A673 (cell line): ENCODE measurements at regions of chr2 and their contacts with region 1.

Region 1: DNA sequence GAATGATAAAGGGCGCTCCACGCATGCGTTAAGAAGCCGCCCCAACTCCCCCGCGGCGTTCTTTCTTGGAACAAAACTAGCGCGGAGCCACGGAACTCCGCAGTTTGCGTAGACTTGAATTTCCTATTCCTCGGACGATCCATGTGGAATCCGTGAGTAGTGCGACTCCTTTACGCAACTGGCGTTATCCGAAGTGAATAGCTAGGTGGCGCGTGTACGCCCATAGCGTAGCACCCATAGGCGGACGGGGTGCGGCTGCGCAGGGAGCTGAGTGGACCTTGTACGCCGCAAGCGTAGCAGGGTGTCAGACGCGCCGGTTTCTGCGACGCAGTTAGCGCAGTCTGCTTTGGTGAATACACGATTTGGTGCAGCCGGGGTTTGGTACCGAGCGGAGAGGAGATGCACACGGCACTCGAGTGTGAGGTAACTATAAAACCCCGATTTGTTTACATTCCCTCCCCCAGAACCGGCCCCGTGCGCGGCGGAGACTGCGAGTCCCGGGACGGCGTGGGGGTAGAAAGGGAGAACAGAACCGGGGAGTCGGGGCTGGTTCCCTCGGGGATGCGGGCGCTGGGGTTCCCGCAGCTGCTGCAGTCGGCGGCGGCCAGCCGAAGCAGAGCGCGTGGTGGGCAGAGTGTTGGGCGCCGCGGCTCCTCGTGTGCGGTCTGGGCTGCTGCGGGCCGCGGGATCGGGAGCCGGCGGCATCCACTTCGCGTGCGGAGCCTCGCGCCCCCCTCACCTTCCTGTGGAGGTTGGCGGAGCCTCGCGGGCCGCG is at the start of gene SLC39A10:
- DNase-seq: peak; percentile 99
- H3K4me3 ChIP-seq: peak within 1 kb of the TSS; percentile 88
- H3K27ac ChIP-seq: peak within 1 kb of the TSS; percentile 93
- H3K4me1 ChIP-seq: peaks cover 14% of the 10 kb centered on the region
- H3K27me3 ChIP-seq: no peaks in the 10 kb centered on the region
- CTCF ChIP-seq: no peak
- total RNA-seq, gene SLC39A10: 42.3 and 58.2 TPM in 2 replicates

Region 2: DNA sequence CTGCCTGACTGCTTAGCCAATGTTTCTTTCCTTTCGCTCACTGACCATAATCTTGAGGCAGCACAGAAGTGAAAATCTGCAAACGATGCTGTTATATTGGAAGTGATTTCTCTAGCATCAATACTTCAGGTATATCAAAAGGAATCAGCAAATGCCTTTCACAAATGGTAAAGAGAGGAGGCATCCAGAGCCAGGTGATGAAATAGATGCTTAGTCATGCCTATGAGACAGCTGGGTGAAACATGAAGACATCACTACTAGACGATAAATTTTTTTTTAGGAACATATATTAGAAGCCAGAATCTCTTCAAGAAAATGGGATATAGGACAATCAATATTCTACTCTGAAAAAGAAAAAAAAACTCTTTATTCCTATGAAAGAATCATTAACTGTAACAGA is 249.3 kb before region 1 on chr2:
- CTCF ChIA-PET with region 1: no interaction called
- POLR2A ChIA-PET with region 1: no interaction called
- intact Hi-C with region 1: loop called (anchors 2 kb)
- DNase-seq: no peak
- H3K4me3 ChIP-seq: no peak overlapping the region
- H3K27ac ChIP-seq: no peak overlapping the region
- H3K4me1 ChIP-seq: no peaks in the 10 kb centered on the region
- H3K27me3 ChIP-seq: no peaks in the 10 kb centered on the region
- CTCF ChIP-seq: no peak

Region 3: DNA sequence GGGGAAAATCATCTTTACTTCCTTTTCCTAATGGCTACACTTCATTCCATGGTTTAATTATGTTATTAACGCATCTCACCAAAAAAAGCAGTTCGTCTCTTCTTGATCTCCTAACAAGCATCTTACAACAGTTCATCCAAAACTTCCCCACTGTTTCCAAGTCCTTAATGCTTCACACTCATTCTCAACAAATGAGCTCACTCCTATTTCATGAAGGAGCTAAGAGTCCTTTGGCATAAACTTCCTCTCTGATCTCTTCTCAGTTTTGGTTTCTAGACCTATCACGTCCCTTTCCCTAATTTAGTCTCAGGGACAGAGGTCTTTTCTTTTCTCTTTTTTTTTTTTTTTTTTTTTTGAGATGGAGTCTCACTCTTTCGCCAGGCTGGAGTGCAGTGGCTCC is 205.9 kb before region 1 on chr2:
- CTCF ChIA-PET with region 1: no interaction called
- POLR2A ChIA-PET with region 1: no interaction called
- intact Hi-C with region 1: no loop called
- DNase-seq: no peak
- H3K4me3 ChIP-seq: no peak overlapping the region
- H3K27ac ChIP-seq: no peak overlapping the region
- H3K4me1 ChIP-seq: peaks cover 10% of the 10 kb centered on the region
- H3K27me3 ChIP-seq: no peaks in the 10 kb centered on the region
- CTCF ChIP-seq: no peak

Region 4: DNA sequence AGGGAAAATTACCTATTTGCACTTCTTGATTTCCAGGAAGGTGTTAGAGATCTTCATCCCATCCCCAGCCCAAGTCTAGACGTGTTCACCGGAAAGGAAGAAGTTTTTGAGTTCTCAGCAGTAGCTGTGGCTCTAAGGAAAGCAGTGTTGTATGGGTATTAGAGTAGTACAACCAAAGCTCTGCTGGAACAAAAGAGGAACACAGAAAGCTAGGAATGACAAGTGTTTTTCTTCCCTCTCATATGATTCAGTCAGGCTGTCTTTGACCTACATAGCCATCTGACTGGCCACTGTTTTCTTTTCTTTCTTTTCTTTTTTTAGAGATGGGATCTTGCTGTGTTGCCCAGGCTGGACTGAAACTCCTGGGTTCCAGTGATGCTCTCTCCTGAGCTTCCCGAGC is 82.7 kb before region 1 on chr2:
- CTCF ChIA-PET with region 1: interaction called, 3 read pairs
- POLR2A ChIA-PET with region 1: no interaction called
- intact Hi-C with region 1: loop called (anchors 5 kb)
- DNase-seq: no peak
- H3K4me3 ChIP-seq: no peak overlapping the region
- H3K27ac ChIP-seq: no peak overlapping the region
- H3K4me1 ChIP-seq: peaks cover 11% of the 10 kb centered on the region
- H3K27me3 ChIP-seq: no peaks in the 10 kb centered on the region
- CTCF ChIP-seq: no peak